ENCODE measurements at regions of chr11 and their contacts with region 1.

Region 1: GRCh38 chr11:118401151-118401878 is at the start of gene ATP5MG:
- DNase-seq: peak; percentile 92 to 96
- ATAC-seq: peak; percentile 85 to 92 (median 88)
- H3K4me3 ChIP-seq: peak within 1 kb of the TSS; percentile 70
- H3K27ac ChIP-seq: peak within 1 kb of the TSS; percentile 84
- H3K4me1 ChIP-seq: peaks cover 29% of the 10 kb centered on the region
- H3K27me3 ChIP-seq: no peaks in the 10 kb centered on the region
- CTCF ChIP-seq: no peak
- total RNA-seq, gene ATP5MG: 237 to 340 (median 251) TPM

Region 2: DNA sequence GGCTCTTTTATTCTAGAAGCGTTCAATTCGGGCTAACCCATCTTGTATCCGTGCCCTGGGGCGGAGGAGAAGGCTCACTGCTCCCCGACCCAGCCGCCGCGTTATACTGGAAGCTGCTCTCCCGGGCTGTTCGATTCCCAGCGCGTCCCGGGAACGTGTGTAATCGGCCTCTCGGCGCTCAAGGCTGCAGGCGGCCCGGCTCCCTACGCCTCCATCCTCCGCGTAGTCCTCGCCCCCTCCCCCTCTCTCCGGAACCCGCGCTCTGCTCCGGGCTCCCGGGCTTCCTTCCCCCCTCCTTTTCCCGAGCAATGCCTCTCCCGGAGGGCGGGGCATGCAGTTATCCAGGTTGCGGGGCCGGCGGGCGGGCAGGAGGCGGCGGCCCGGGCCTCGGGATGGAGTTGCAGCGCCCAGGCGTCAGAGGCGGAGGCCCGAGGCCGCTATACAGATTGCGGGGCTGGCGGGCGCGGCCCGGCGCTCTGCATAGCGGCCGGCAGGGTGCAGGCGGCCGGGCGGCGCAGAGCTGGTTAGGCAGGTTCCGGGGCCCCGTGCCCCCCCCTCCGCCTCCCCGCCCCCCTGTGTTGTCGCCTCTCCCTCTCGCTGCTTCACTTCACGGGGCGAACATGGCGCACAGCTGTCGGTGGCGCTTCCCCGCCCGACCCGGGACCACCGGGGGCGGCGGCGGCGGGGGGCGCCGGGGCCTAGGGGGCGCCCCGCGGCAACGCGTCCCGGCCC is 34.7 kb after region 1 on chr11 and contains the start of gene KMT2A:
- intact Hi-C with region 1: loop called (anchors 5 kb)
- DNase-seq: peak; percentile 99
- ATAC-seq: peak; percentile 94 to 98 (median 96)
- H3K4me3 ChIP-seq: peak within 1 kb of the TSS; percentile 97
- H3K27ac ChIP-seq: peak within 1 kb of the TSS; percentile 80
- H3K4me1 ChIP-seq: peaks cover 35% of the 10 kb centered on the region
- H3K27me3 ChIP-seq: no peaks in the 10 kb centered on the region
- CTCF ChIP-seq: no peak
- total RNA-seq, gene KMT2A: 18.1 to 27.3 (median 22.0) TPM

Region 3: DNA sequence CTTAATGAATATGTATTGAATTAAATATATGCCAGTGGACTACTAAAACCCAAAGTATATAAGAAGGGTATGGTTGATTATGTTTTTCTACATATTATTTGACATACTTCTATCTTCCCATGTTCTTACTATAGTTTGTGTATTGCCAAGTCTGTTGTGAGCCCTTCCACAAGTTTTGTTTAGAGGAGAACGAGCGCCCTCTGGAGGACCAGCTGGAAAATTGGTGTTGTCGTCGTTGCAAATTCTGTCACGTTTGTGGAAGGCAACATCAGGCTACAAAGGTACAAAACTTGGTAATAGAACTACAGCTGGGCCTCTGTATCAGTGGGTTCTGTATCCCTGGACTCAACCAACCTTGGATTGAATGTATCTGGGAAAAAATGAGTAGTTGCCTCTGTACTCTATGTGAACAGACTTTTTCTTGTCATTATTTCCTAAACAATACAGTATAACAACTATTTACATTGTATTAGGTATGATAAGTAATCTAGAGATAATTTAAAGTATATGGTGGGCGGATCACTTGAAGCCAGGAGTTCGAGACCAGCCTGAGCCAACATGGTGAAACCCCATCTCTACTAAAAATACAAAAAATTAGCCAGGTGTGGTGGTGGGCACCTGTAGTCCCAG is 87.3 kb after region 1 on chr11:
- intact Hi-C with region 1: loop called (anchors 5 kb)
- DNase-seq: peak; percentile 56 to 73
- ATAC-seq: peak; percentile 61 to 89 (median 69)
- H3K4me3 ChIP-seq: no peak overlapping the region
- H3K27ac ChIP-seq: no peak overlapping the region
- H3K4me1 ChIP-seq: no peaks in the 10 kb centered on the region
- H3K27me3 ChIP-seq: no peaks in the 10 kb centered on the region
- CTCF ChIP-seq: peak; percentile 76

Region 4: GRCh38 chr11:118679483-118679882 is 278.2 kb after region 1 on chr11 and contains the start of gene TREH:
- intact Hi-C with region 1: no loop called
- DNase-seq: peak in 1 of 2 donors; percentile 41
- ATAC-seq: no peak
- H3K4me3 ChIP-seq: no peak within 1 kb of the TSS
- H3K27ac ChIP-seq: no peak within 1 kb of the TSS
- H3K4me1 ChIP-seq: no peaks in the 10 kb centered on the region
- H3K27me3 ChIP-seq: no peaks in the 10 kb centered on the region
- CTCF ChIP-seq: no peak
- total RNA-seq, gene TREH: not detected

Measured in psoas muscle (tissue), 8 donors.